Upper lobe of right lung (tissue), 1 donor: ENCODE measurements at regions of chr4 and their contacts with region 1.

Region 1: DNA sequence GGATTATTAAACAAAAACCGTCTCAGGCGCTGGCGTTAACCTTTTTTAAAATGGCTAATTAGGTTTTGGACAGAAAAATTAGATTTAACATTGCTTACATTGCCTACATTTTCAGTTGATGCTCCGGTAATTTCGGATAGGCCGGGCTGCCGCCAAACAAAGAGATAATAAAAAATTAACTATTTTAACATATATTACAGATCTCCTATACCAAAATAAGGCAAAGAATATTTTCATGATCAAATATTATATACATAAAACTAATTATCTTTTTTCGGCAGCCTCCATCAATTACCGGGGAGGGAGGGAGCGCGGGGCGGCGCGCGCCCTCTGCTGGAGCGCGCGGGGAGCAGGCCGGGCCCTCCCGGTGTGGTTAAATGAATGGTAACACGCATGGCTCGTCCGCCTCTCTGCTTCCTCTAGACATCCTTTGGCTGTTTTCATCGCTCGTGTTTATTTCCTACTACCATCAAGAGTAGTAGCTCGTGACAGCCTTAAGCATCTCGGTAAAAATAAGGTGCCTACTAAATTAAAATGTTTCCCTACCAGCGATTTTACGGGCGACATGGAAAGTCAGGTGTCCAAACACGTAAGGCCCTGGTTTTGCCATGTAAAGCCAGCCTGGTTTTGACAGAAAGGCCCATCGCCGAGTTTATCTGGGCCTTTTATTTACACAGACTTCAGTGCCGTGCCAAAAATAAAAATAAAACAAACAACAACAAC is 52.4 kb upstream of the TMEM33 start:
- DNase-seq: peak; percentile 74
- ATAC-seq: peak; percentile 90
- H3K4me3 ChIP-seq: peak overlapping the region; percentile 40
- H3K27ac ChIP-seq: no peak overlapping the region
- H3K4me1 ChIP-seq: peaks cover 27% of the 10 kb centered on the region
- H3K27me3 ChIP-seq: peaks cover 69% of the 10 kb centered on the region
- CTCF ChIP-seq: peak; percentile 97

Region 2: DNA sequence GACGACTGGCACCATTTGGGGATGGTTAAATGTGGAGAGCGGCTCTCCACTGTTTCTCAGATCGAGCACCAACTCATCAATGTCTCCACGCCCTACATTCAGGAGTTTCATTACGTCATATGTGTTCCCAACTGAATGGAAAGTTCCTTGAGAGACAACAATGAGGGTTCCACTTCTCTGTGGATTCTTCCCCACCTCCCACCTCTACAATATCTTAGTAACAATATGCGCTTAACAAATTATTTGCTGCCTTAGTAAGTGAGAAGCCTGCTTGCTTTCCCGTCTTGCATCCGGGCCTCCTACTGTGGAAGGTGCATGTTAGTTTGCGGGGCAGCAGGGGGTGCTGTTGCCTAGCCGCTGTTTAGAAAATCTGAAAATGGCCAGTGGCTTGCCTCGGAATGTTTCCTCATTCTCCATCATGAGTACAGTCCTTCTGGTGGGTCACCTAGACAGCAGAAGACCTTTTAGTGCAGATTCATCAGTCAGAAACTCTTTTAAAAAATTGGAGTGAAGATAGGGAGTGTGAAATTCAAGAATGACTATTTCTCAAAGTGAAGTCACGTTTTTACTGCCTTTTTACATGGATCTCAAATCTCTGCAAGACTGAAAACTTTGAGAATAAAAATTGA is 190.0 kb before region 1 on chr4:
- intact Hi-C with region 1: loop called (anchors 10 kb)
- DNase-seq: peak; percentile 65
- ATAC-seq: peak; percentile 86
- H3K4me3 ChIP-seq: no peak overlapping the region
- H3K27ac ChIP-seq: no peak overlapping the region
- H3K4me1 ChIP-seq: no peaks in the 10 kb centered on the region
- H3K27me3 ChIP-seq: no peaks in the 10 kb centered on the region
- CTCF ChIP-seq: peak; percentile 70

Region 3: DNA sequence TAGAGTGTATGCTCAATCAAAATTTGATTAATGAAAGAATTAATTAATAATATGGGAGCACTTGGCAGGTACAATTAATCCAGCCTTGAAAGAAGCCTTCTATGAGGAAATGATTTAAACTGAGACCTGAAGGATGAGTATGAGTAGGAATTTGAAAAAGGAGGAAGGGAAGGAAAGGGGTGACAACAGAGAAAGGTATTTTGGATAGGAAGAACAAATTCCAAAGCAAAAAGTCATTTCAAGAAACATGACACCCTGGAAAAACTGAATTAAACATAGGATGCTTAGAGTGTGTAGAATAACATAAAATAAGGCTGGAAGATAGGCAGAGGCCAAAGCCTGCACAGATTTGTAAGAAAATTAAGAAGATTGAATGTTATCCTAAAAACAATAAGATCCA is 163.9 kb before region 1 on chr4:
- intact Hi-C with region 1: no loop called
- DNase-seq: no peak
- ATAC-seq: no peak
- H3K4me3 ChIP-seq: no peak overlapping the region
- H3K27ac ChIP-seq: no peak overlapping the region
- H3K4me1 ChIP-seq: no peaks in the 10 kb centered on the region
- H3K27me3 ChIP-seq: peaks cover 8% of the 10 kb centered on the region
- CTCF ChIP-seq: no peak

Region 4: DNA sequence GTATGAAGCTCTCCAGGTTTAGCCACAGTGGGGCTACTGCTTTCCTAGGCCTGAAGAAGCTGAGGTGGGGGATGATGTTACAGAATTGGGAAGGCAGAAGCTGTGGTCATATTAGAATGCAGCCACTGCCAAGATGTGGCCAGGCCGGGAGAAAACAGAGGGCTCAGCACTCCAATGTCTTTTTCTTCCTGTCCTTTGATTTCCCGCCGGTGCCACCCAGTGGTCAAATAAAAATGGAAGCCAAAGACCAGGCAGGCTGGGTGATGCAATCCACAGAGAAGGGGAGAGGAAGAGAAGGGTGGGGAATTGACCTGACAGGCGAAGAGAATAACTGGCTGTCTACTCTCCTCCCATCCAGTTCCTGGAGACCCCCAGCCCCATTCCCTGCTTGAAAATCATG is 419.6 kb after region 1 on chr4:
- intact Hi-C with region 1: no loop called
- DNase-seq: no peak
- ATAC-seq: peak; percentile 50
- H3K4me3 ChIP-seq: no peak overlapping the region
- H3K27ac ChIP-seq: no peak overlapping the region
- H3K4me1 ChIP-seq: no peaks in the 10 kb centered on the region
- H3K27me3 ChIP-seq: no peaks in the 10 kb centered on the region
- CTCF ChIP-seq: no peak